B cell (primary cell): ENCODE measurements at regions of chr2 and their contacts with region 1.

Region 1: DNA sequence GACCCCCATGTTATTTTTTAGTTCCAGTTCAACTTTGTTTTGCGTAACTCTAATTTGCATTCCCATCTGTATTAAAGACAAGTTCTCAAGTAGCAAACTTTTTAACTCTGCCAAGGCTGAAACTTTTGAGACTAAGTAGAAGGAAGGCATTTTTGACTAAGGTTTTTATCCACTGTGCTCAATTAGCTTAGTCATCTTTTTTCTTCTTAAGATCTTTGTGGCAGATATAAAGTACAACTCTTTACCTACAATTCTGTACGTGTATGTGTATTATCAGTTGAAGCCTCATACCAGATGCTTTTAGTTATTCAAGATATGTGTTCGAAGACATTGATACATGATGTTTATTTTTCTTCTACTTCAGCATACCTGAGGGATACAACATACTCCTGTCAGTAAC is 41.6 kb downstream of the CREB1 start:
- DNase-seq: no peak
- ATAC-seq: no peak
- H3K4me3 ChIP-seq: no peak overlapping the region
- H3K4me3 Mint-ChIP-seq: no peak overlapping the region
- H3K27ac ChIP-seq: no peak overlapping the region
- H3K27ac Mint-ChIP-seq: peak overlapping the region; percentile 46
- H3K4me1 ChIP-seq: no peaks in the 10 kb centered on the region
- H3K4me1 Mint-ChIP-seq: peaks cover 8% of the 10 kb centered on the region
- H3K27me3 ChIP-seq: no peaks in the 10 kb centered on the region
- H3K27me3 Mint-ChIP-seq: no peaks in the 10 kb centered on the region
- CTCF ChIP-seq: no peak

Region 2: GRCh38 chr2:207121784-207122183 is 449.6 kb before region 1 on chr2:
- CTCF ChIA-PET with region 1: no interaction called
- POLR2A ChIA-PET with region 1: no interaction called
- intact Hi-C with region 1: no loop called
- DNase-seq: no peak
- ATAC-seq: no peak
- H3K4me3 ChIP-seq: no peak overlapping the region
- H3K4me3 Mint-ChIP-seq: no peak overlapping the region
- H3K27ac ChIP-seq: no peak overlapping the region
- H3K27ac Mint-ChIP-seq: no peak overlapping the region
- H3K4me1 ChIP-seq: peaks cover 16 to 17% of the 10 kb centered on the region in 2 donors
- H3K4me1 Mint-ChIP-seq: peaks cover 53% of the 10 kb centered on the region
- H3K27me3 ChIP-seq: no peaks in the 10 kb centered on the region
- H3K27me3 Mint-ChIP-seq: no peaks in the 10 kb centered on the region
- CTCF ChIP-seq: no peak

Region 3: DNA sequence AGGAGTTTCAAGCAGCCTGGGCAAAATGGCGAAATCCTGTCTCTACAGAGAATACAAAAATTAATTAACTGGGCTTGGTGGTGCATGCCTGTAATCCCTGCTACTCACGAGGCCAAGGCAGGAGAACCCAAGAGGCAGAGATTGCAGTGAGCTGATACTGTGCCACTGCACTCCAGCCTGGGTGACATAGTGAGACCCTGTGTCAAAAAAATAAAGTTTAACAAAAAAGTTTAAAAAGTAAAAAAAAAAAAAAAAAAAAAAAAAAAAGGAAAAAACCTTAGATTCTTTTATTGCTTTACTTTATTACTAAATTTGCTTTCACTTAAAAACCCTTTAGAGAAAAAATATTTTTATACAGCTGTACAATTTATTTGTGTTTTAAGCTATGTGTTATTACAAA is 30.9 kb before region 1 on chr2:
- CTCF ChIA-PET with region 1: no interaction called
- POLR2A ChIA-PET with region 1: no interaction called
- intact Hi-C with region 1: loop called (anchors 5 kb)
- DNase-seq: no peak
- ATAC-seq: no peak
- H3K4me3 ChIP-seq: no peak overlapping the region
- H3K4me3 Mint-ChIP-seq: no peak overlapping the region
- H3K27ac ChIP-seq: no peak overlapping the region
- H3K27ac Mint-ChIP-seq: no peak overlapping the region
- H3K4me1 ChIP-seq: peaks cover 21 to 25% of the 10 kb centered on the region in 2 donors
- H3K4me1 Mint-ChIP-seq: peaks cover 57% of the 10 kb centered on the region
- H3K27me3 ChIP-seq: no peaks in the 10 kb centered on the region
- H3K27me3 Mint-ChIP-seq: no peaks in the 10 kb centered on the region
- CTCF ChIP-seq: no peak

Region 4: GRCh38 chr2:208006833-208007232 is 435.5 kb after region 1 on chr2:
- CTCF ChIA-PET with region 1: no interaction called
- POLR2A ChIA-PET with region 1: no interaction called
- intact Hi-C with region 1: no loop called
- DNase-seq: no peak
- ATAC-seq: no peak
- H3K4me3 ChIP-seq: no peak overlapping the region
- H3K4me3 Mint-ChIP-seq: no peak overlapping the region
- H3K27ac ChIP-seq: no peak overlapping the region
- H3K27ac Mint-ChIP-seq: no peak overlapping the region
- H3K4me1 ChIP-seq: peaks cover 0 to 5% of the 10 kb centered on the region in 2 donors
- H3K4me1 Mint-ChIP-seq: peaks cover 16% of the 10 kb centered on the region
- H3K27me3 ChIP-seq: no peaks in the 10 kb centered on the region
- H3K27me3 Mint-ChIP-seq: no peaks in the 10 kb centered on the region
- CTCF ChIP-seq: no peak